ENCODE measurements at regions of chr6 and their contacts with region 1.

Region 1: GRCh38 chr6:160088069-160088783 is 33.4 kb upstream of the SLC22A1 start:
- DNase-seq: peak; percentile 55 to 80
- ATAC-seq: peak; percentile 88 to 93
- H3K4me3 ChIP-seq: no peak overlapping the region
- H3K27ac ChIP-seq: 0 out of 6 replicates have a peak overlapping the region, but pooled peaks of 1 of the 2 experiments have one; percentile 4
- H3K4me1 ChIP-seq: 0 out of 3 replicates have a peak, but pooled peaks cover 3% of the 10 kb centered on the region
- CTCF ChIP-seq: peak; percentile 74
- EP300 ChIP-seq: no peak
- POLR2A ChIP-seq: no peak
- RAD21 ChIP-seq: peak; percentile 78 to 80

Region 2: DNA sequence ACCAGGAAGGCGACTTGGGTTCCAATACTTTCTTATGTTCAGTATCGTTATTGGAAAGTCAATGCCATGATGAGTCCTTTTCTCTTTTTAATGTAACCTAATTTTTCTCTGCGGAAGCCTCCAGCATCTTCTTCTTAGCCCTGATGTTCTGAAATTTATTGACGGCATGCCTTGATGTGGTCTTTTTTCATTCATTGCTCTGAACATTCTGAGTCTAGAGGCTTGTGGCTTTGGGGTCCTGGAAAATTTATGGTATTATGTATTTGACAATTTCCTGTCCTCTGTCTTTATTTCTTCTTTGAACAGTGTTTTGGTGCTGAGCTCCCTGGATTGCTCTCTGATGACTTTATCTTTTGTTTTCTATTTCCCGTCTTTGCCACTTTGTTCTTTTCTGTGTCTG is 226.1 kb before region 1 on chr6:
- CTCF ChIA-PET with region 1: interaction called, 14 read pairs
- POLR2A ChIA-PET with region 1: no interaction called
- DNase-seq: no peak
- ATAC-seq: no peak
- H3K4me3 ChIP-seq: no peak overlapping the region
- H3K27ac ChIP-seq: no peak overlapping the region
- H3K4me1 ChIP-seq: no peaks in the 10 kb centered on the region
- CTCF ChIP-seq: no peak
- EP300 ChIP-seq: no peak
- POLR2A ChIP-seq: no peak
- RAD21 ChIP-seq: no peak

Measured in A549 (cell line).